AG04449 (cell line): ENCODE measurements at regions of chr16 and their contacts with region 1.

Region 1: DNA sequence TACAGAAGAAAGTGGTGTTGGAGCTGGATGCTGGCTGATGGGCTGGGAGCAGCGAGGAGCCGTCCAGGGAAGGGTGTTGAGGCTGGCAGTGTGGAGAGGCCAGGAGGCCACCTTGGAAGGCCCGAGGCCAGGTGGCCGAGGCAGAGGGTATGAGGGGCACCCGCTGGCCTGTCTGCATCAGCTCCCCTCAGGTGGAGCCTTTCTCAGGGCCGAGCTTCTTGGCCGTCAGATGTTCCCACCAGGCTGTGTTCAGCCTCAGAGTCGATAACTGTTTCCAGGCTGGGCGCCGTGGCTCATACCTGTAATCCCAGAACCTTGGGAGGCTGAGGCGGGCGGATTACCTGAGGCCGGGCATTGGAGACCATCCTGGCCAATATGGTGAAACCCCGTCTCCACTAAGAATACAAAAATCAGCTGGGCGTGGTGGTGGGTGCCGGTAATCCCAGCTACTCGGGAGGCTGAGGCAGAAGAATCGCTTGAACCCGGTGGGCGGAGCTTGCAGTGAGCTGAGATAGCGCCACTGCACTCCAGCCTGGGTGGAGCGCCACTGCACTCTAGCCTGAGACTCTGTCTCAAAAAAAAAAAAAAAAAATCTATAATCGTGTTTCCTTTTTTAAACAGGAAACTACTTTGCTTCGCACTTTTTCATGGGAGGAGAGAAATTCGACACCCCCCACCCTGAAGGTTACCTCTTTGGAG is 25.3 kb downstream of the MGRN1 start:
- DNase-seq: no peak
- H3K4me3 ChIP-seq: no peak overlapping the region
- CTCF ChIP-seq: no peak

Region 2: GRCh38 chr16:4634768-4635167 is 15.1 kb before region 1 on chr16:
- CTCF ChIA-PET with region 1: interaction called, 12 read pairs
- POLR2A ChIA-PET with region 1: no interaction called
- DNase-seq: no peak
- H3K4me3 ChIP-seq: no peak overlapping the region
- CTCF ChIP-seq: no peak

Region 3: GRCh38 chr16:4660454-4661007 is 10.6 kb after region 1 on chr16:
- CTCF ChIA-PET with region 1: interaction called, 17 read pairs
- POLR2A ChIA-PET with region 1: no interaction called
- DNase-seq: no peak
- H3K4me3 ChIP-seq: no peak overlapping the region
- CTCF ChIP-seq: no peak

Region 4: DNA sequence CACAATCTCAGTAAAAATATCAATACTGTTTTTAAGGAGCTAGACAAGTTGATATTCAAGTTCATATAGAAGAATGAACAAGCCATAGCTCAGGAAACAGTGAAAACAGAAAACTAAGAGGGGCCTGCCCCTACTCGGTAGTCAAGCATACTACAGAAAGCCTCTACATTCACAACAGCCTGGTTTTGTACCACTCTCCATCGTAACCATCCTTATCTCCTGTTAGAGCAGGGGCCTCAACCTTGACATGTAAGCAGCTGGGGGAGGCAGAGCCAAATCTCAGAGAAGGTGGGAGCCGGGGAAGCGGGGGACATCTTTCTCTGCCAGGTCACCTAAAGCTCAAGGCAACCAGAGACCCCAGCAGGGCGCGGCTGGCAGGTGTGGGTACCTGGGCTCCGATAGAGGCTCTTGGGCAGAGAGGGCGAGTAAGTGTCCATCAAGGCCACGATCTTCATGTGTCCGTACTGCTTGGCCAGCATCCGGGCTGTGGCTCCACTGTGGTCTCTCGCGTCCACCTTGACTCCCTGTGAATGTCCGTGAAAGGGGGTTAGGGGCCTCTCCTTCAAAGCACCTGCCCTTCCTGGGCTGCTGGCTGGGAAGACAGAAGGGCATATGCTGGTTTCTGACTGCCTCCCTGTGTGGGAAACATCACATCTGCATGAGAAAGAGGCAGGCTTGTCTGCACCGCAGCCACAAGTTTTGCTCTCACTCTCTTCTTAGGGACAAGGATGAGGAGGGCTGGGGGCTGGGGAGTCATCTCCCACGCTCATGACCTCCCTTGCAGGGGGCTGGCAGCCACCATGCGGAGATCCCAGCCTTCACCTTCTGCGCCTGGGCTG is 64.0 kb after region 1 on chr16:
- CTCF ChIA-PET with region 1: no interaction called
- POLR2A ChIA-PET with region 1: no interaction called
- DNase-seq: no peak
- H3K4me3 ChIP-seq: no peak overlapping the region
- CTCF ChIP-seq: no peak